OCI-LY7 (cell line): ENCODE measurements at regions of chr4 and their contacts with region 1.

Region 1: GRCh38 chr4:77203380-77204197 is 46.6 kb downstream of the CCNG2 start:
- DNase-seq: peak; percentile 86
- H3K4me3 ChIP-seq: no peak overlapping the region
- H3K27ac ChIP-seq: no peak overlapping the region
- H3K4me1 ChIP-seq: peaks cover 4% of the 10 kb centered on the region
- CTCF ChIP-seq: peak; percentile 95

Region 2: DNA sequence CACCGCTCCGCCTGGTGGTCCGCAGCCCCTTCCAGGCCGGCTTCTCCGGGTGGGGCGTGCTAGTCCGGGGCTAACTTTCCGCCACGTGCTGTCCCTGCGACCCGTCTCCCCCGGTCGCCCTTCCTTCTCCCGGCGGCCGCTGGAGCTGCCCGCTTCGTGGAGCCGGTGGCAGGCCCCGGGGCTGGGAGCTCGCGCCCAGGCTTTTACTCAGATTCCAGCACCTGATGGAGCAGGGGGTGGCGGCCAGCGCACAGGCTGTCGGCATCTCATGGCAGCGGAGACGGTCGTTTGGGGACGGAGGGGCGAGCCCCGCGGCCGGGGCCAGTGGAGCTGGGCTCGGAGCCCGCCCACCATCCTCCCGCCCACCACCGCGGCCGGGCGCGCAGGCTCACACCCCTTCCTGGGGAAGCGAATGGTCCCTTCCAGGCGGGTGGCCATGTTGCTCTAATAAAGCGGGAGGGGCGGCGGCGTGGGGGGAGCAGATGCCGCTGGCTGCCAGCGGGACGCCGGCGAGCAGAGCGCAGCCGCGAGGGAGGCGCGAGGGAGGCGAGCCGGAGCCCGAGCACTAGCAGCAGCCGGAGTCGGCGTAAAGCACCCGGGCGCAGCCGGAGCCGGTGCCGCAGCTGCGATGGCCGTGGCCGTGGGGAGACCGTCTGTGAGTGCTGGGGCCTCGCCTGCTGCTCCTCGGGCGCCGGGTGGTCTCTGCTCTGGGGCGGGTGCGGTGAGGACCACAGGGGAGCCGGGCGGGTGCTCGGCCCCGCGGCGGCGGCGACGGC is 254.1 kb before region 1 on chr4 and contains the start of gene SEPTIN11:
- CTCF ChIA-PET with region 1: no interaction called
- POLR2A ChIA-PET with region 1: no interaction called
- intact Hi-C with region 1: loop called (anchors 5 kb)
- DNase-seq: peak; percentile 87
- H3K4me3 ChIP-seq: peak within 1 kb of the TSS; percentile 73
- H3K27ac ChIP-seq: no peak within 1 kb of the TSS
- H3K4me1 ChIP-seq: peaks cover 8% of the 10 kb centered on the region
- CTCF ChIP-seq: no peak
- total RNA-seq, gene SEPTIN11: 16.5 and 23.5 TPM in 2 replicates

Region 3: DNA sequence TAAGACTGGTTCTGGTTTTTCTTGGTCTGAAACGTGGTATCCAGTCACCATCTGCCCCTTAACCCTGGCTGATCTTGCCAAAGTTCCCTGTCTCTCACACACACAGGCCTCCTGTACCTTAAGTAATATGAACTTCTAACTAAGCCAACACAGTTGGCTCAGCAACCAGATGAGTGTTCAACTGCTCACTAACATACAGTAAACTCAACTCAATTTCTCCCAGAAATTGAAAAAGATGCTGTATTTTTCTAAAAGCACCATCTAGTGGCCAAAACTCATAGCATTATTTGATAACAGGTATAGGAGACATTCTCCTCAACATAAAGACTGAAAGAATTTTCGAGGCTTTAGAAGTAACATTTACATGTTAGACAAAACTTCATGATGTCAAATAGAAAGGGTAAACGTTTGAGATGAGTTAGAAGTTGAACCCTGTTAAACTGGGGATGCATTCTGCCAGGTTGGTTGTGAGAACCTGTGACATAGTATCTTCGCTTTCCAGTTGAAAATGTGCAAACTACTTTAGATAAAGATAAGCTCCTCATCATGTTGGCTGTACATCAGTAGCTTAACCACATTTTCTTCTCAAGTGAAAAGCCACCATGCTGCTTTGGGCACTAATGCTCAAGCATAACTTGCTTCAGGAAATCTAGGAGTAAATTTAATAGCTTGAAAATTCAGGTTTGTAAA is 159.0 kb before region 1 on chr4:
- CTCF ChIA-PET with region 1: interaction called, 6 read pairs
- POLR2A ChIA-PET with region 1: interaction called, 9 read pairs
- intact Hi-C with region 1: loop called (anchors 2 kb)
- DNase-seq: peak; percentile 62
- H3K4me3 ChIP-seq: no peak overlapping the region
- H3K27ac ChIP-seq: no peak overlapping the region
- H3K4me1 ChIP-seq: peaks cover 8% of the 10 kb centered on the region
- CTCF ChIP-seq: peak; percentile 95

Region 4: GRCh38 chr4:77052352-77052751 is 151.2 kb before region 1 on chr4:
- CTCF ChIA-PET with region 1: interaction called, 11 read pairs
- POLR2A ChIA-PET with region 1: interaction called, 9 read pairs
- intact Hi-C with region 1: loop called (anchors 1 kb)
- DNase-seq: peak; percentile 67
- H3K4me3 ChIP-seq: no peak overlapping the region
- H3K27ac ChIP-seq: no peak overlapping the region
- H3K4me1 ChIP-seq: no peaks in the 10 kb centered on the region
- CTCF ChIP-seq: peak; percentile 90

Region 5: DNA sequence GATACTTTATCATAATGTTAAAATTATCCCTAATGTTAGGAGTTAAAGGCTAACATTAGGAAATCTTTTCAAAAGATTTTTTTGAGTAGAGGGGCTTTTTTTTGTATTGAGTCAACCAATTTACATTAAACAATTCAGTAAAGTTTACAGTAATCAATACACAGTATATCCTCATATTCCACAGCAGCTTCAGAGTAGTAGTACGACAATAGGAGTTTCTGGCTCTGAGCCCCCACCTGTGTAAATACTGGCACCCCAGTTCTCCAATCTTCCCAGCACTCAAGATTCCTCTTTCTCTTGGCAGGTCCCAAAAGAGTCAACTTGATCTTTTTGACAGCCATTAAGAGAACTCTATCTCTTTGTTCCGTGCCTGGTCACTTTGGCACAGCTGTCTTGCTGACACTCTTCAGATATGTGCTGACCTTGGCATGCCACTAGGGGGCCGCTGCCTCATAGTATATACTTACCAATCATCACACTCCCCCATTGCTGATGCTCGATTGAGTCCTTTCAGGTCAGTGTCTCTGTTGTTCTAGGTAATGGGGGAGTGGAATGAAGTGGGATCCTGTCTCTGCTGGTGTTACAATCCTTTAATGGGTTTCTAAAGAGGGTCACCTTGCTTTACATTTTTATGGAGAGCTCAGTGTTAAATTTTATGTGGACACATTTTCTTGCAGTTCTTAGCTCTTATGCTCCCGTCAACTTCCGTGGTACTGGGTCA is 108.3 kb before region 1 on chr4:
- CTCF ChIA-PET with region 1: interaction called, 26 read pairs
- POLR2A ChIA-PET with region 1: interaction called, 15 read pairs
- intact Hi-C with region 1: loop called (anchors 1 kb)
- DNase-seq: peak; percentile 87
- H3K4me3 ChIP-seq: no peak overlapping the region
- H3K27ac ChIP-seq: no peak overlapping the region
- H3K4me1 ChIP-seq: peaks cover 26% of the 10 kb centered on the region
- CTCF ChIP-seq: peak; percentile 98

Region 6: DNA sequence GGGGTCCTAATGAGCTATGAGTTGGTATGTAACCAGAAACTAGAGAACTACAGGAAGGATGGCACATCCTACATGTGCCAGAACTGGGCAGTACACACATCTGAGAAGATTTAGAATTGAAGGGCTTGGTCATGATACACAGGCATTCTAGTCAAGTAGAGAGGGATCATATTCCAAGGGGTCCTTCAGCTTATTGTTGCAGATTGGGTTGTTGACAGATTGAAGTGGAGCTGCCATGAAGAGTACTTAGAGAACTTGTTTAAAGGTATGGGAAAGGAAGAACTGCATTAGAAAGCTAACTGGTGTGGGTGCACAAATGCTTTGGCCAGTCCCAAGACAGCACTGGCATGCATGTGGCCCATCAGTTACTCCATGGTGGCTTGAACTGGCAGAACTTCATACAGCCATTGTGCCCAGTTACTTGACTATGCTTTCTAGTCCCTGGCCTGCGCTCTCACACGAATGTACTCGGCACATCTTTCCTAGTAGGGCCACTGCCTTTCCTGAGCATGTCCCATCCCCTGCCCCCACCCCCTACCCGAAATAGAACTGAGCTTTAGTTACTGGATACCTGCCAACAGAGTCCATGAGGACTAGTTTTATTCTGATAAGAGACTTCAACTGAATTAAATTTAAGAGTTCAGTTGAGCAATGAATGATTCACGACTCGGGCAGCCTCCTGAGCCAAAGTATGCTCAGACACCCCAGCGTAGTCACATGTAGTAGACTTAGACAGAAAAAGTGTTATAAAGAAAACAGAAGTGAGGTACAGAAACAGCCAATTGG is 17.4 kb after region 1 on chr4:
- CTCF ChIA-PET with region 1: no interaction called
- POLR2A ChIA-PET with region 1: no interaction called
- intact Hi-C with region 1: no loop called
- DNase-seq: no peak
- H3K4me3 ChIP-seq: no peak overlapping the region
- H3K27ac ChIP-seq: no peak overlapping the region
- H3K4me1 ChIP-seq: no peaks in the 10 kb centered on the region
- CTCF ChIP-seq: no peak

Region 7: GRCh38 chr4:77385124-77385969 is 181.8 kb after region 1 on chr4:
- CTCF ChIA-PET with region 1: no interaction called
- POLR2A ChIA-PET with region 1: no interaction called
- intact Hi-C with region 1: no loop called
- DNase-seq: peak; percentile 55
- H3K4me3 ChIP-seq: no peak overlapping the region
- H3K27ac ChIP-seq: no peak overlapping the region
- H3K4me1 ChIP-seq: no peaks in the 10 kb centered on the region
- CTCF ChIP-seq: peak; percentile 89

Region 8: DNA sequence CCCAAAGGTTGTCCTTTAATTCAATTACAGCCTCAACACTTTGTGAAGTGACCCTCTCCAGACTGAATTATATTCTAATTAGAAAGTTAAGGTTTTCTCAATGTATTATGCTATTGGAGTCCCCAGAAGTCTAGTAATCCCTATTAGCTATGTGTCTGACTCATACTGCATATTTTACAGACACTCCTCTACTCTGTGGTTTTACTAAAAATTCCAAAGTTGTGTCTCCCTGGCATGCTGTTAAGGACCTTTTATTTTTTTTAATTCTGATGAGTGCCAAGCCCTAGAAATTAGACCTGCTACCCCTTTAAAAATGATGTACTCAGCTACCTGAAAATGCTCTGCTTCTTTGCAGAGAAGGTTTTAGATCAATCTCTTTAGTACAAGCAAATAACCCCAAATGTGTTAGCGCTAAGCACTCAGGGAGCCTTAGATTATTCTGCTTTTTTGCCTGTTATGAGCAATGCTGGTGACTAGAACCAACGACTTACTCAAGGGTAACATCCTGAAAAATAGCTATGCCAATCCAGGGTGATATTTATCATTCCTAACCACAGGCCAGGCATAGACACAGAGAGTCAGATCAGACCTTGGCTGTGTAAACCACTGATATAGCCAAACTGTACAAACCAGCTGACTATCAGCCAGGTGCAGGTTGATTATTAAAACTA is 376.0 kb after region 1 on chr4:
- CTCF ChIA-PET with region 1: no interaction called
- POLR2A ChIA-PET with region 1: no interaction called
- intact Hi-C with region 1: no loop called
- DNase-seq: no peak
- H3K4me3 ChIP-seq: no peak overlapping the region
- H3K27ac ChIP-seq: no peak overlapping the region
- H3K4me1 ChIP-seq: no peaks in the 10 kb centered on the region
- CTCF ChIP-seq: no peak